Naive thymus-derived CD8-positive, alpha-beta T cell (primary cell): ENCODE measurements at regions of chr5 and their contacts with region 1.

Region 1: GRCh38 chr5:157265714-157266285 is at the start of gene CYFIP2:
- DNase-seq: peak; percentile 79 to 91 (median 86)
- ATAC-seq: peak; percentile 81 to 85
- H3K4me3 Mint-ChIP-seq: peak within 1 kb of the TSS; percentile 93 to 98 (median 96)
- H3K27ac Mint-ChIP-seq: peak within 1 kb of the TSS; percentile 97 to 99 (median 98)
- H3K4me1 Mint-ChIP-seq: peaks cover 47 to 77% (median 74%) of the 10 kb centered on the region in 4 donors
- H3K27me3 Mint-ChIP-seq: no peaks in the 10 kb centered on the region
- polyA plus RNA-seq, gene CYFIP2: 417 to 668 (median 506) TPM

Region 2: GRCh38 chr5:157189223-157189622 is 76.6 kb before region 1 on chr5:
- POLR2A ChIA-PET with region 1: interaction called, 12 read pairs
- DNase-seq: no peak
- ATAC-seq: no peak
- H3K4me3 Mint-ChIP-seq: peak overlapping the region; percentile 80 to 100 (median 96)
- H3K27ac Mint-ChIP-seq: peak overlapping the region; percentile 71 to 99 (median 94)
- H3K4me1 Mint-ChIP-seq: peaks cover 43 to 92% (median 85%) of the 10 kb centered on the region in 4 donors
- H3K27me3 Mint-ChIP-seq: no peaks in the 10 kb centered on the region

Region 3: DNA sequence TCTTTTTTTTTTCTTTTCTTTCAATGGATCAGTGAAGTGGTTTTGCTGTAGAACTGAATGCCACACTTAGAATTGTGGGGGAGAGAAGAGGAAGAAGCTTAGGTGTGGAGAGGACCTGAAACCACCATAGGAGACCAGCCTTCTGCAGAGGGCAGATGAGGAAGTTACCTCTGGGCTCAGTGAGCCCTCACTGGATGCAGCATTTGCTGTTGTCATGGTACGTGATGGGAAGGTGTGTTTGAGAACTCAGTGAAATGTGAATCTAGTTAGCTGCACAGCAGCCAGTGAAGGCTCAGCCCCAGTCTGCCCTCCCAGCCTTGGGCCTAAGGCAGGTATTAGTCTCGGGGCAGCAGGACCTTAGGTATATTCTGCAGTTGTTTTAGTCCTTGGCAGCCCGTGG is 17.6 kb after region 1 on chr5:
- POLR2A ChIA-PET with region 1: interaction called, 42 read pairs
- DNase-seq: peak in 4 of 10 donors; percentile 38 to 53 (median 40)
- ATAC-seq: peak; percentile 90 to 96
- H3K4me3 Mint-ChIP-seq: peak overlapping the region; percentile 1 to 67 (median 48)
- H3K27ac Mint-ChIP-seq: peak overlapping the region; percentile 58 to 93 (median 80)
- H3K4me1 Mint-ChIP-seq: peaks cover 38 to 89% (median 88%) of the 10 kb centered on the region in 4 donors
- H3K27me3 Mint-ChIP-seq: no peaks in the 10 kb centered on the region

Region 4: GRCh38 chr5:157303667-157304327 is 38.0 kb after region 1 on chr5:
- POLR2A ChIA-PET with region 1: interaction called, 38 read pairs
- DNase-seq: peak; percentile 42 to 80 (median 63)
- ATAC-seq: peak; percentile 66 to 81
- H3K4me3 Mint-ChIP-seq: peak overlapping the region; percentile 67 to 90 (median 83)
- H3K27ac Mint-ChIP-seq: peak overlapping the region; percentile 86 to 98 (median 94)
- H3K4me1 Mint-ChIP-seq: peaks cover 37 to 84% (median 69%) of the 10 kb centered on the region in 4 donors
- H3K27me3 Mint-ChIP-seq: no peaks in the 10 kb centered on the region

Region 5: GRCh38 chr5:157308836-157309465 is 43.2 kb after region 1 on chr5:
- POLR2A ChIA-PET with region 1: interaction called, 38 read pairs
- DNase-seq: peak in 6 of 10 donors; percentile 27 to 69 (median 44)
- ATAC-seq: no peak
- H3K4me3 Mint-ChIP-seq: peak overlapping the region in 7 of 10 donors; percentile 22 to 68 (median 38)
- H3K27ac Mint-ChIP-seq: peak overlapping the region; percentile 86 to 98 (median 94)
- H3K4me1 Mint-ChIP-seq: peaks cover 34 to 83% (median 82%) of the 10 kb centered on the region in 4 donors
- H3K27me3 Mint-ChIP-seq: no peaks in the 10 kb centered on the region